Heart left ventricle (tissue), 16 donors: ENCODE measurements at regions of chr1 and their contacts with region 1.

Region 1: GRCh38 chr1:114346480-114347029 is 164.4 kb downstream of the TRIM33 start:
- DNase-seq: peak; percentile 92 to 99 (median 93)
- ATAC-seq: peak; percentile 96 to 99 (median 98)
- H3K4me3 ChIP-seq: peak overlapping the region; percentile 30 to 67 (median 56)
- H3K27ac ChIP-seq: peak overlapping the region; percentile 41 to 88 (median 72)
- H3K4me1 ChIP-seq: peaks cover 0 to 23% (median 9%) of the 10 kb centered on the region in 12 donors
- H3K27me3 ChIP-seq: no peaks in the 10 kb centered on the region
- CTCF ChIP-seq: peak; percentile 100
- POLR2A ChIP-seq: no peak

Region 2: DNA sequence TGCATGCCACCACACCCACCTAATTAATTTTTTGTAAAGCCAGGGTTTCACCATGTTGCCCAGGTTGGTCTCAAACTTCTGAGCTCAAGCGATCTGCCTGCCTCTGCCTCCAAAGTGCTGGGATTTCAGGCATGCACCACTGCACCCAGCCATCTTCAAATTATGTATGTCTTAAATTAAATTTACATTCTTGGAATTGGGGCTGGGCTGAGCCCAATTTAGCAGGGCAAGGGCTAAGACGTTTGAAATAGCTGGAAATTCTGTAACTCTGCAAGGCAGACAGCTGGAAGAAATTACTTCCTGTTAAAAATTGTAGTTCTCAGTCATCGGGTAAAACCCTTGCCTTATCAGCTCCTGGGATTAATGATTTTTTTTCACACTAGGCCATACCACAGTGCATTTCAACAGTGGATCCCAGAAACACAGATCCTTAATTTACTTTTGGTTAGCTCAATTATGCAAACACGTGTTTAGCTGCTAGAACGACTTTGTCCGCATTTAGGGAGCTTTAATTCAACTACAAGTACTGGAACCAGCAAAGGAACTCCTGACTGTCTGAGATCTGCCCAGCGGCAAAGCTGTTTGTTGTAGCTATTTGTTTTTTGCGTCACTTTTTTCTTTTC is 284.0 kb before region 1 on chr1:
- intact Hi-C with region 1: no loop called
- DNase-seq: no peak
- ATAC-seq: no peak
- H3K4me3 ChIP-seq: no peak overlapping the region
- H3K27ac ChIP-seq: no peak overlapping the region
- H3K4me1 ChIP-seq: no peaks in the 10 kb centered on the region
- H3K27me3 ChIP-seq: no peaks in the 10 kb centered on the region
- CTCF ChIP-seq: no peak
- POLR2A ChIP-seq: no peak

Region 3: DNA sequence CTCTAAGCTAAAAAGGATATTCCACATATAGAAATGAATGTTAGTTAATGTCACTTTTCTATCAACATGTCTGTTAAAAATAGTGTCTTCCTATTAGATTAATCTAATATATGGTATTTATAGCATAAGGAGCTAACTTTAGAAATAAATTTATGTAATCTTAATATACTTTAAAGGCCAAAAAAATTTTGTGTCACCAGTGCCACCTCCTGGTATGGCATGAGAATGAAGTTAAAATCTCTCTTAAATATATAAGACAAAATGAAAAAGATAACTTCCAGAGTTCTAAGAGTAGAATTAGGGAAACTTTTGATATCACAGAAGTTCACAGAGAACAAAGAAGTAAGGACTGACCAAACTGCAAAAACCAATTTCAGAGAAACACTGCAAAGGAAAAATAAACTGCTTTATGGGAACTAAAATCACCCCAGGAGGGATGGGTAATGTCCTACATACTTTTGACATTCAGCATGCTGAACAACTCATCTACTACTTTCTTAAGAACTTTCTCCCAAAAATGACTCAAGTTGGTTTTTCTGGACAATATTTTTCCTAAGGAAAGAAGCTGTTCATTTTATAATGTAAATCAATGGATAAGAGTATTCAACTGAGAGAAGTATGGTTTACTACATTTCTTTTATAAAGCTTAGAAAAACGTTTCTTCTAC is 81.7 kb after region 1 on chr1:
- intact Hi-C with region 1: loop called in 9 of 10 experiments (anchors 1 to 5 kb)
- DNase-seq: no peak
- ATAC-seq: no peak
- H3K4me3 ChIP-seq: no peak overlapping the region
- H3K27ac ChIP-seq: peak overlapping the region in 5 of 12 donors; percentile 7 to 17 (median 11)
- H3K4me1 ChIP-seq: peaks cover 0 to 24% (median 2%) of the 10 kb centered on the region in 12 donors
- H3K27me3 ChIP-seq: no peaks in the 10 kb centered on the region
- CTCF ChIP-seq: peak; percentile 12 to 59 (median 42)
- POLR2A ChIP-seq: no peak

Region 4: DNA sequence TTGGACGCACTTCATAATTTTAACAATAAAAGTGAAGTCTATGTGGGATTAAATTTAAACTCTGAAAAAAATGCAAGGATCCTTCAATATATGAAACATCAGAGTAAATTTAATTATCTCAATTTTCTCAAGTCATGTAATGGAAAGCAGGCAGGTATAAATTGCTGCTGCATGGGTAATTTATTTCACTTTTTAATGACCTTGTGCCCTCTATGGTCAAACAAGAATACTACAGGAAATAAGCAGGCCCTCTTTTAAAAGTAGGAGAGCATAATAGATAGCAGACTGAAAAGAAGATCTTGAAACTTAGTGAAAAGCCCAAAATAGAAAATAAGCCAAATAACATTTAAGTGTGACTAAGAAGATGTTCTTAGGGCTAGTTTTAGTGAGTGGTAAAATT is 212.0 kb after region 1 on chr1:
- intact Hi-C with region 1: loop called in 7 of 10 experiments (anchors 1 to 10 kb)
- DNase-seq: no peak
- ATAC-seq: no peak
- H3K4me3 ChIP-seq: no peak overlapping the region
- H3K27ac ChIP-seq: no peak overlapping the region
- H3K4me1 ChIP-seq: no peaks in the 10 kb centered on the region
- H3K27me3 ChIP-seq: no peaks in the 10 kb centered on the region
- CTCF ChIP-seq: peak in 11 of 12 donors; percentile 22 to 54 (median 36)
- POLR2A ChIP-seq: no peak

Region 5: GRCh38 chr1:114670083-114671010 is 323.8 kb after region 1 on chr1:
- intact Hi-C with region 1: loop called in 6 of 10 experiments (anchors 2 to 10 kb)
- DNase-seq: peak; percentile 95 to 96 (median 95)
- ATAC-seq: peak; percentile 99 to 100 (median 100)
- H3K4me3 ChIP-seq: peak overlapping the region; percentile 45 to 96 (median 76)
- H3K27ac ChIP-seq: peak overlapping the region in 11 of 12 donors; percentile 70 to 91 (median 83)
- H3K4me1 ChIP-seq: peaks cover 0 to 17% (median 4%) of the 10 kb centered on the region in 12 donors
- H3K27me3 ChIP-seq: peaks cover 0 to 4% (median 0%) of the 10 kb centered on the region in 9 donors
- CTCF ChIP-seq: peak in 8 of 12 donors; percentile 8 to 35 (median 23)
- POLR2A ChIP-seq: peak; percentile 49 to 87